ENCODE measurements at regions of chr1 and their contacts with region 1.

Region 1: GRCh38 chr1:186210258-186210657 is 164.8 kb downstream of the TPR start:
- DNase-seq: no peak
- ATAC-seq: no peak

Region 2: DNA sequence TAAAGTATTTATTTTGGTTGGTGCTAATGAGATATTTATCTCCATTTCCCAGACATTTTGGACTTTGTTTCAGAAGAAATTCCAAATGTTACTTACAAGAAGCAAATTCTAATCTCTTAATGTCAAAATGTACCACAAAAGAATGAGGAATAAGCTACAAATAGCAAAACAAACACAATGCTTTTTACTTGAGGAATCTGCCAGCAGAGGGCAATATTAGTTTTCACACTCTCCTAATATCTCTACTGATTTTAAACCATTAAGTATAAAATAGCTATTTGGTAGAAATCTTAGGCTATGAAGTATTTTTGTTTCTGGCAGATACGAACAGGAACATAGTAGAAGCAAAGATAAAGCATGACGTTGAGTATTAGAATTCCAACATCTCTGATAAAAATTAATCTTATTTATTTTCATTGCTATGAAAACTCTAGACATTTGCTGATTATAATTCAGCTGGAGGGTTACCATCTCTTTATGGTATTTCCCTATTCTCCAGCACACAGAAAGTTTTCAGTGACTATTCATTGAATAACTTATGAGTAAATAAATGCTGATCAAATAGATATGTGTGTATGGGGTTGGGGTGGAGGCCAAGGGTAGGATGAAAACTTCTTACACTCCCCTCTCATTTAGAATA is 489.5 kb before region 1 on chr1:
- intact Hi-C with region 1: loop called (anchors 1 kb)
- DNase-seq: no peak
- ATAC-seq: peak; percentile 69

Region 3: GRCh38 chr1:186306533-186306932 is 96.3 kb after region 1 on chr1:
- intact Hi-C with region 1: no loop called
- DNase-seq: no peak
- ATAC-seq: no peak